ENCODE measurements at regions of chr17 and their contacts with region 1.

Region 1: GRCh38 chr17:44324571-44325275 is at the start of gene SLC25A39:
- DNase-seq: peak; percentile 94 to 98 (median 95)
- H3K4me3 ChIP-seq: peak within 1 kb of the TSS; percentile 67
- H3K27ac ChIP-seq: peak within 1 kb of the TSS; percentile 80 to 92
- H3K4me1 ChIP-seq: peaks cover 7% of the 10 kb centered on the region
- H3K27me3 ChIP-seq: no peaks in the 10 kb centered on the region
- CTCF ChIP-seq: peak in 2 of 3 donors; percentile 10 to 11
- EP300 ChIP-seq: no peak
- POLR2A ChIP-seq: peak; percentile 87
- total RNA-seq, gene SLC25A39: 47.7 to 111 (median 64.0) TPM

Region 2: GRCh38 chr17:44070455-44071197 is 254.1 kb before region 1 on chr17 and contains the start of gene G6PC3:
- intact Hi-C with region 1: loop called in 1 of 4 experiments (anchors 10 kb)
- DNase-seq: peak; percentile 94 to 96 (median 95)
- H3K4me3 ChIP-seq: peak within 1 kb of the TSS; percentile 64
- H3K27ac ChIP-seq: peak within 1 kb of the TSS; percentile 65 to 72
- H3K4me1 ChIP-seq: peaks cover 8% of the 10 kb centered on the region
- H3K27me3 ChIP-seq: no peaks in the 10 kb centered on the region
- CTCF ChIP-seq: peak in 2 of 3 donors; percentile 23 to 49
- EP300 ChIP-seq: no peak
- POLR2A ChIP-seq: peak; percentile 67
- total RNA-seq, gene G6PC3: 14.4 to 56.7 (median 36.2) TPM

Region 3: GRCh38 chr17:44210342-44211192 is 114.2 kb before region 1 on chr17:
- intact Hi-C with region 1: loop called in 1 of 4 experiments (anchors 5 kb)
- DNase-seq: peak; percentile 82 to 93 (median 88)
- H3K4me3 ChIP-seq: no peak overlapping the region
- H3K27ac ChIP-seq: peak overlapping the region in 1 of 2 donors; percentile 7
- H3K4me1 ChIP-seq: peaks cover 4% of the 10 kb centered on the region
- H3K27me3 ChIP-seq: no peaks in the 10 kb centered on the region
- CTCF ChIP-seq: peak; percentile 96 to 99 (median 99)
- EP300 ChIP-seq: no peak
- POLR2A ChIP-seq: peak; percentile 23

Region 4: GRCh38 chr17:44218344-44219107 is 106.2 kb before region 1 on chr17:
- intact Hi-C with region 1: loop called (anchors 2 to 5 kb)
- DNase-seq: peak; percentile 87 to 93 (median 91)
- H3K4me3 ChIP-seq: peak overlapping the region; percentile 94
- H3K27ac ChIP-seq: peak overlapping the region; percentile 98 to 99
- H3K4me1 ChIP-seq: peaks cover 16% of the 10 kb centered on the region
- H3K27me3 ChIP-seq: no peaks in the 10 kb centered on the region
- CTCF ChIP-seq: peak; percentile 19 to 90 (median 30)
- EP300 ChIP-seq: no peak
- POLR2A ChIP-seq: peak; percentile 45